ENCODE measurements at regions of chr11 and their contacts with region 1.

Region 1: DNA sequence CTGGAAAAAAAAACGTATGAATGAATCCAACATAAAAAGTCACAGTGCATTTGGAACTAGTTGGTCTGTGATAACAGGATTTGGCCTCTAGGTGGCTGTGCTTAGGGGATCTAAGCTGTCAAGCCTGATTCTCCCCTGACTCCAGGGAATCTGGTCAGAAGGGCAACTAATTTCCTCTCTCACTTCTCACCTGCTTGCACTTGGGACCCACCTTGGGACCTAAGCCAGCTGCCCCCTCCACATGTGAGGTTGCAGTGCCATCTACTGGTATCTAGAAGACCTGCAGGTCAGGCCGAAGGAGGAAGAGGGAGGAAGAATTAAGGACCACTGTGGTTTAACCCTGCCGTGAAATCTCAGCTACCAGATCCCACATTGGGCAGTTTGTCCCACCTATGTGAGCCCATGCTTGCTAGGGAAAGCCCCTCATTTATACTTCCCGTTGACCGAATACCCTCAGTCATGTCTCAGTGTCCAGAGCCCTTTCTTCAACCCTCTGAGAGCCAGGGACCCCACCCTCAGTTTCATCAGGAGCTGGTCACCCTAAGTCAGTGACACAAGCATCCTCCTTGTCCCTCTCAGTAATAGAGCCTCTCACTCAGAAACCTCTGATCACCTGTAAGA is 33.2 kb upstream of the CAVIN3 start:
- DNase-seq: no peak

Region 2: GRCh38 chr11:6022956-6023355 is 330.5 kb before region 1 on chr11:
- intact Hi-C with region 1: loop called in 1 of 2 experiments (anchors 10 kb)
- DNase-seq: no peak

Region 3: DNA sequence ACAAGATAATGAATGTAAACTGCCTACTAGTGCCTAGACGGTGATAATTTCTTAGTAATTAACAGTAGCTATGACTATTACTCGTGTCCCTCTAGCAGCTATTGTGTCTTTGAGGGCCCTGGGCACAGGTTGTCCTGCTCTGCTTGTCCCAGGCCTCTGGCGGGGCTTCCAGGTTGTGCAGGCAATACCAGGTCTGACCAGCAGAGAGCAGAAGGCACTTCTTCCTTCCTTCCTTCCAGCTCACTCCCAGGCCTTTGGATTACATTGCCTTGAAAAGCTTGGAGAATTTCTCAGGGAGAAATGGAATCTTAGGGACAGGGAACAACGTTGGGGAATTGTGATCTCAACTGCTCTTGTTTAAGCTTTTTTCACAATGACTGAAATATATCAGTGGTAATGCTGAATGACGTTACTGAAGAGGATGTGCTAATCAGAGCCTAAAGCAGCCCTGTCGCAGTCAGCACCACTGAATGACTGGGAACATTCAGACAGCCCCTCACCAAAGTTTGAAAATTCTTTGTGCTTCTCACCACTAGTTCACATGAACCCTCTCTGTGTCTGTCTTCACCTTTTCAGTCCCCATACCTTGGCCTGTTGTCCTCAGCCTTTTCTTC is 102.2 kb before region 1 on chr11:
- intact Hi-C with region 1: loop called in 1 of 2 experiments (anchors 5 kb)
- DNase-seq: peak; percentile 82

Region 4: DNA sequence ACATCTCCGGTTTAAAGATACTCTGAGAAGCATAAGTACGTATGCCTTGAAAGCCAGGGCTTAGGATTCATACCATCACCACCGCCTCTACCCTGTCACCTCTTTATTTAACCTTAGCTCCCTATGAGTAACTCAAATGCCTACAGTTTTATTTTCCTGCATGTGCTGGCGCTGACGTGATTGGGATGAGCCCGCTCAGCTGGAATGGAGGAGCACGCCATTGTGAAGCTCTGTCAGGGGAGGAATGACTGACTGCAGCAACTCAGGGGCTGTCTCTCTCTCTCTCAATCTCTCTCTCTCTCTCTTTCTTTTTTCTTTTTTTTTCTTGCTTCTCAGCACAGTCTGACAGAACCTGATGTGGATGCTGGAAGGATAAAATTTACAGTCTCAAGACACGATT is 45.6 kb before region 1 on chr11:
- intact Hi-C with region 1: loop called in 1 of 2 experiments (anchors 10 kb)
- DNase-seq: no peak

Region 5: GRCh38 chr11:6612213-6613041 is 258.9 kb after region 1 on chr11 and contains the start of gene TAF10:
- intact Hi-C with region 1: no loop called
- DNase-seq: peak; percentile 100
- total RNA-seq, gene TAF10: 85.9 to 107 TPM